Astrocyte of the cerebellum (primary cell): ENCODE measurements at regions of chr1 and their contacts with region 1.

Region 1: GRCh38 chr1:147541672-147542568 is 619 bp downstream of the BCL9 start:
- DNase-seq: no peak
- H3K4me3 ChIP-seq: peak overlapping the region; percentile 50
- CTCF ChIP-seq: no peak

Region 2: DNA sequence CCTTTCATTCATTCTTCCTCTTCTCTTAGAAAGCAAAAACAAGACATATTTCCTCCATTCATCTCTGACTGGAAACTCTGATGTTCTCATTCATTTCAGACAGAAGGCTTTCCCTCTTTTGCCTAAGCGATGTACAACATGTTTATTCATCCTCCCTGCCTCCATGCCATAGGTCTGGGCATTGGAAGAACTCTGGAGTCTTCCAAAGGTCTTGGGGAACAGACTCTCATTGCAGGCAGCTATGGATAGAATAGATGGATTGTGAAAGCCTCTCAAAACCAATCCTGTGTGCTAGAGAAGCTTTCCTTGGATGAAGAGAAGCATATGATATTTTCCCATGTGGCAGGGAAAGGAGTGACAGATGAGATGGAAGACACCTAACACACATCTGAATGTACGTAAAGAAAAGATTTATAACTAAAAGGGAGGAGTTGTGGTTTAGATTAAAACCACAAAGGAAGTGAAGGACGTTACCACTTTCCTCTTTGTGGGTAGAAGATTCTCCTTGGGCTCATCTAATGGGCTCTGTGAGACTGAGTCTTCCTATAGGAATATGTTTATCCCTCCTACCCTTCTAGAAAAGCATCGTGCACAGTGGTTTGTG is 38.1 kb after region 1 on chr1:
- in situ Hi-C with region 1: loop called (anchors 5 kb)
- DNase-seq: no peak
- H3K4me3 ChIP-seq: no peak overlapping the region
- CTCF ChIP-seq: no peak

Region 3: DNA sequence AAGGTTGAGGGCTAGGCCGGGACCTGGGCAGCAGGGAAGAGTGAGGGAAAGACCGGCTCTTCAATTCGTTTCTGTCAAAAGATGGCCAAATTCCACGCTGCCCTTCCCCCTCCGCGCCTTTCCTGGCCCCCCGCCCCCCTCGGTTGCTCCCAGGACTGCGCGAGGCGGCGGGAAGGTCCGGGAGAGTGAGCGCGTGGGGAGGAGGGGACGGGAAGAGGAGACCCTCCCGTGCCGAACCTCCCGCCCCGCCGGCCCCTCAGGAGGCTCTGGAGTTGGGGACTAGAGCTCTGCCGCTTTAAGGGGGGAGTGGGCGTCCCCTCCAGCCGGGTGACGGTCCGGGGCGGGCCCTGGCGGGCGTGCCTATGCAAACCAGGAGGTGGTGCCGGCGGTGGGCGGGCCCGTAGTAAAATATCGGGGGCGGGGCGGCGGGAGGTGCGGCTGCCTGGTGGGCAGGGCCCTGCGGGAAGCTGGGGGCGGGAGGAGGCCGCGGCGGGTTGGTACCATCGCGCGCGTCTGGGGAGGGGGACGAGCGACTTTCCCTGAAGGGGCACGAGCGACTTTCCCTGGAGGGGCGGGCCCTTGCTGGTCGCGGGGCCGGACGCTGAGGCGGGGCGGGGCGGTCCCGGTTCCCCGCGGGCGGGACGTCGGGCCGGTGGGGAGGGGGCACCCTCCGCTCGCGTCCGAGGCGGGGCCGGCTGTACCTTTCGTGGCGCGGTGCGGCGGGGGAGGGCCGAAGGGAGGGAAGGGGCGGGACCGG is 57.6 kb after region 1 on chr1:
- in situ Hi-C with region 1: no loop called
- DNase-seq: peak; percentile 92
- H3K4me3 ChIP-seq: peak overlapping the region; percentile 56
- CTCF ChIP-seq: no peak

Region 4: DNA sequence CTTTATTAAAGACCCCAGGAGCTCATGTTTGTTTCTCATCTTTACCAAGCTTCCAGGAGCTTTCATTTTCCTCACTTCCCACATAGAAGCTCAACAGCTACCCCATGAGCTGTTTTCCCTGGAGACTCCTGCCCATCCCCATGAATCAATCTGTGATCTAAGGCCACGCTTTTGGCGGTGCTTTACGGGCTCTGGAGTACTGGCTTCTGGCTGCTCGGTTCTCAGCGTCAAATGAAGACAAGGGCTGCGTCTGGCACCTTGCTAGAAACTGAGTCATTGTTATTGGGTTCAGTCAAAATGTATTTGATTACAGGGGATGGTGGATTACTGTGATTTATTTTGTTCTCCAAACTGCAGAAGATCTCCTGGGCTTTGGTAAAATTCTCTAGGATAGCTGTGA is 88.5 kb after region 1 on chr1:
- in situ Hi-C with region 1: loop called (anchors 5 kb)
- DNase-seq: no peak
- H3K4me3 ChIP-seq: no peak overlapping the region
- CTCF ChIP-seq: no peak